B cell (primary cell): ENCODE measurements at regions of chr4 and their contacts with region 1.

Region 1: DNA sequence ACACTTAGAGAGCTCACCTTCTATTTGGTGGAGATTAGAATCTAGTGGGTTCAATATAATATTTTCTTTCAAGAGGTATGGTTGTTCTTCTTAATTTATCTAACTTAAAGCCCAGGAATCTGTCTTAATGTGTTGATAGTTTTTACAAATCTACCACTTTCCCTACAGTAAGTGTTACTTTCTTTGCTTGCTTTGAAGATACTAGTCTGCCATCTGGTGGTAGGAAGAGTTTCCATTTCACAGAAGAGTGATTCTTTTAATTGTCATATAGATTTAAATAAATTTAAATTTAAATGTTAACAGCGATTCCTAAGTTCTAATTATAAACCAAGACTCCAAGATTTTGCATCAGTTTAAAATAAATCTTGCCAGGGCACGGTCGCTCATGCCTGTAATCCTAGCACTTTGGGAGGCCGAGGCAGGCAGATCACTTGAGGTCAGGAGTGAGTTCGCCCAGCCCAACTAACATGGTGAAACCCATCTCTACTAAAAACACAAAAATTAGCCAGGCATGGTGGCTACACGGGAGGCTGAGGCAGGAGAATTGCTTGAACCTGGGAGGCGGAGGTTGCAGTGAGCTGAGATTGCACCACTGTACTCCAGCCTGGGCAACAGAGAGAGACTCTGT is 43.5 kb downstream of the NUDT9 start:
- DNase-seq: peak; percentile 59
- ATAC-seq: no peak
- H3K4me3 ChIP-seq: no peak overlapping the region
- H3K4me3 Mint-ChIP-seq: no peak overlapping the region
- H3K27ac ChIP-seq: no peak overlapping the region
- H3K27ac Mint-ChIP-seq: no peak overlapping the region
- H3K4me1 ChIP-seq: no peaks in the 10 kb centered on the region
- H3K4me1 Mint-ChIP-seq: no peaks in the 10 kb centered on the region
- H3K27me3 ChIP-seq: no peaks in the 10 kb centered on the region
- H3K27me3 Mint-ChIP-seq: no peaks in the 10 kb centered on the region
- CTCF ChIP-seq: peak; percentile 92

Region 2: DNA sequence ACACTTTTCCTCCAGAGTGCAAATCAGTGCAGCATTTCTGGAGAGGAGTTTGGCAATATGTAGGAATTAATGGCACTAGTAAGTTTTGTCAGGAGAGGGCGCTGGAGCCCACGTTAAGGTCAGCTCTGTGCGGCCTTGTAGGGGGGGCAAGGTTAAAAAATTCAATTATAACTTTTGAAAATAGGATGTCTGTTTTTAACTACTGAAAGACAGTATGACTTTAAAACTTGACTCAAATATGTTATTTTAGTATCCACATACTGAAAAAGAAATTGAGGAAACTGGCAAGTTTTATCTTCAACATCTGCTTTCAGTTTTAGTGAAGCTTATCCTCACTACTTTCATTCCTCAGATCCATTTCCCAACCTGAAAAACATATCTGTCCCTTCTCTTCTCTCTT is 112.3 kb before region 1 on chr4:
- CTCF ChIA-PET with region 1: interaction called, 28 read pairs
- POLR2A ChIA-PET with region 1: interaction called, 7 read pairs
- intact Hi-C with region 1: loop called (anchors 2 kb)
- DNase-seq: peak; percentile 51
- ATAC-seq: no peak
- H3K4me3 ChIP-seq: no peak overlapping the region
- H3K4me3 Mint-ChIP-seq: no peak overlapping the region
- H3K27ac ChIP-seq: no peak overlapping the region
- H3K27ac Mint-ChIP-seq: no peak overlapping the region
- H3K4me1 ChIP-seq: no peaks in the 10 kb centered on the region
- H3K4me1 Mint-ChIP-seq: no peaks in the 10 kb centered on the region
- H3K27me3 ChIP-seq: no peaks in the 10 kb centered on the region
- H3K27me3 Mint-ChIP-seq: no peaks in the 10 kb centered on the region
- CTCF ChIP-seq: peak; percentile 66